ENCODE measurements at regions of chr12 and their contacts with region 1.

Region 1: DNA sequence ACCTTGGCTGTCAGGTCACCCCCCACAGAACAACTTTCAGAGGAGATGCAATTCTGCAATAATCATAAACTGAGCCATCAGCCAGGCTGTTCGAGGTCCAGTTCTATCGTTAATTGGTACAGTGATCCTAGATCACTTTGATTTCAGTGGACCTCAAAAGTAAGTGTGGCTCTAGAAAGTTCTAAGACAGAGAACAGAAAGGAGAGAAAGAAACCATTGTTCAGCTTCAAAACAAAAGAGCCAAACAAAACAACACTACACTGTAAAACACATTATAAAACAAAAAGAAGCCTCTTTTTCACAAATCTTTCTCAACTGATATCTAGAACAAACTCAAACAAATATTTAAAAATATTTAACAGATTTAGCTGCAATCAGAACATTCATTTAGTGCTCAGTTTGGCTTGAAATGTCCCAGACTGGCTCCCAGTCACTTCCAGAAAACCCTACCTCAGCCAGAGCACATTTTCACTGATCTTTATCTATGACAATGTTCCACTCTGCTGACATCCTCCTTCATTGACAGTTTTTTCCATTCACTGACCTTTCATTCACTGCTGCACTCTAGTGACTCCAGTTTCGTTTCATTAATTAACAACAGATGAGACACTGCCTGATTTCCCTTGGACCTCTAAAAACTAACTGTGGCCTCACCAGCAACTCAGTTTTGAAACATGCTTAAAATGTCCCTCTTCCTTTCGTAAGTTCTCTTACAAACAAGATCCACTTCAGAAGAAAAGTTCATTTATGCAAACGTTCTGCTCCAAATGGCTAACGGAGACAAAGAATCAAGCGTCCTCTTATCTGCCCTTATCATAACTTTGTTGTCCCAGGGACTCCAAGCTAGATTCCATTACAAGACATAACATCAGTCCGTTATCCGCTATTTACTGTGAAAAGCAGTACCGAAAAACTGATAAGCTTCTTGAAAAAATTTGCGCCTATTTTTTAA is 56.8 kb downstream of the DUSP16 start:
- DNase-seq: no peak
- H3K4me3 Mint-ChIP-seq: peak overlapping the region; percentile 53
- H3K27ac Mint-ChIP-seq: peak overlapping the region; percentile 97
- H3K4me1 Mint-ChIP-seq: peaks cover 70% of the 10 kb centered on the region
- H3K27me3 Mint-ChIP-seq: no peaks in the 10 kb centered on the region

Region 2: GRCh38 chr12:12456637-12457036 is 49.2 kb before region 1 on chr12:
- intact Hi-C with region 1: loop called (anchors 2 kb)
- DNase-seq: no peak
- H3K4me3 Mint-ChIP-seq: peak overlapping the region; percentile 55
- H3K27ac Mint-ChIP-seq: peak overlapping the region; percentile 96
- H3K4me1 Mint-ChIP-seq: peaks cover 55% of the 10 kb centered on the region
- H3K27me3 Mint-ChIP-seq: no peaks in the 10 kb centered on the region

Region 3: DNA sequence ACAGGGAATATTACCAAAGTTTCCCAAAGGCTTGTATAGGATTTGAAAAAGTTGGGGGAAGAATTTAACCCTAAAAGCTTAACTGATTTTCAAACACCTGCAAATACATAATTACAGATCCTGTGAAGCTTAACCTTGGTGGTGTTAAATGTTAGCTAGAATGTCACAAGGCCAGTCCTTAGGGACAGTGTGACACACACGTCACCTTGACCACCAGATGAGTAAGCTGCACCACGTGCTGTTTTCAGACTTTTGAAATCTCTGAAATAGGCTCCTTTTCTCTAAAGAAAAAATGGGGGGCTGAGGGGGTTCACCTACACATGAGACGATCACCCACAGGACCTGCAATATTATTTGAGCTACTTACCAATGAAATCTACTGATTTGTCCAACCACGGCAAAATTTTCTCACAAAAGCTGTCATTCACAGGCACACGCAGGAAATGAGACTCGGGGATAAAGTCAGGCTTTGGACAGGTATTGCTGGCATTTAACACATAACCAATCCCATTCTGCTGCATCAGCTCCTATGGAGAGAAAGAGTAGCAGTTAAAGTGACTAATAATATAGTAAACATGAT is 19.1 kb before region 1 on chr12:
- intact Hi-C with region 1: loop called (anchors 1 kb)
- DNase-seq: no peak
- H3K4me3 Mint-ChIP-seq: no peak overlapping the region
- H3K27ac Mint-ChIP-seq: peak overlapping the region; percentile 80
- H3K4me1 Mint-ChIP-seq: peaks cover 51% of the 10 kb centered on the region
- H3K27me3 Mint-ChIP-seq: no peaks in the 10 kb centered on the region

Region 4: DNA sequence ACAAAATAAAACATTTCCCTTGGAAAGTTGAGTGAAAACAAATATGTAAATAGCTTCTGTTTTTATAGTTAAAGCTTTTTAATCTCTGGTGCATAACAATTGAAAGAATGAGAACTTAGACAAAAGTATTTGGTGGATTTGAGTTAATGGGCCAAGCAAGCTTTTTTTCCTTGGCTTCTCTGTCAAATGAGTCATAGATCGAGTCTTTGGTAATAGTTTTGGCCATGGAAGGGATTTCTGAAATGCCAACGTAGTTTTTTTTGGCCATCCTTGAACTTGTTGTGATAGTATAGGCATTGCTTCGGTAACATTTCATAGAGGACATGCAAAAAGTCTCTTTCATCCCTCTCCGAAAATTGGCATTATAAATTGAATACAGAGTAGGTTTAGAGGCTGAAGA is 155.3 kb after region 1 on chr12:
- intact Hi-C with region 1: no loop called
- DNase-seq: no peak
- H3K4me3 Mint-ChIP-seq: no peak overlapping the region
- H3K27ac Mint-ChIP-seq: no peak overlapping the region
- H3K4me1 Mint-ChIP-seq: peaks cover 3% of the 10 kb centered on the region
- H3K27me3 Mint-ChIP-seq: no peaks in the 10 kb centered on the region